ENCODE measurements at regions of chr2 and their contacts with region 1.

Region 1: DNA sequence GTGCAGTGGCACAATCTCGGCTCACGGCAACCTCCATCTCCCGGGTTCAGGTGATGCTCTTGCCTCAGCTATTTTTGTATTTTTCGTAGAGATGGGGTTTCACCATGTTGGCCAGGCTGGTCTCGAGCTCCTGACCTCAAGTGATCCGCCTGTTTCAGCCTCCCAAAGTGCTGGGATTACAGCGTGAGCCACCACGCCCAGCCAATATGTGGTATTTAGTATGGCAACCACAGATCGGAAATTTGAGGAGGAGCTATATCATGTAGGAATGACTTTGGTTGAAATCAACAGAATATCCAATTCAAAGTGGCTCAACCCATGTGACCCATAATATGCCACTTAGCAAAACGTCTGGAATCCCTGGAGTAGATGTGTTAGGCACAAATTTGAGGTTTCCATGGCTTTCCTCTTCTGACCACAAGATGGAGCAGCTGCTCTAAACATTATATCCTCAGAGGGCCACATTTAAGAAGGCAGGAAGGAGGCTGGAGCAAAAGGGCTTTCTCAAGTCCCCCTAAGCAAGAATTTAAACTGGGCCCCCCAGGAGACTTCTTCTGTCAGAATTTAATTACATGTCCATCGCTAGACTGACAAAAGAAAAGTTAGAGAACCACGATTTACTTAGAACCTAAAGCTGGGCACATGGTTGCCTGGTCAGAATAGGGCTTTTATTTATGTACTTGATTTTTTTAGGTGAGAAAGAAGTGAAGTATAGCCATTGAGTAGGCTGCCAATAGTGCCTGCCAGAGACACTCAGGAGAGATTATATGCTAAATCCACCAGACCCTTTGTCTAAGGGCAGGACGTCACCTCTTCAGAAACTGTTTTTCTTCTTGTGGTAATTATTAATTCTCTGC is 49.6 kb upstream of the ITSN2 start:
- DNase-seq: peak in 2 of 4 donors; percentile 65 to 83
- ATAC-seq: peak; percentile 97
- H3K4me3 ChIP-seq: no peak overlapping the region
- H3K27ac ChIP-seq: no peak overlapping the region
- H3K4me1 ChIP-seq: no peaks in the 10 kb centered on the region
- H3K27me3 ChIP-seq: peaks cover 0 to 9% of the 10 kb centered on the region in 2 donors
- CTCF ChIP-seq: peak; percentile 76 to 78

Region 2: GRCh38 chr2:24827321-24828237 is 417.7 kb after region 1 on chr2:
- intact Hi-C with region 1: loop called (anchors 5 to 10 kb)
- DNase-seq: peak in 3 of 4 donors; percentile 74 to 90 (median 77)
- ATAC-seq: peak; percentile 96
- H3K4me3 ChIP-seq: no peak overlapping the region
- H3K27ac ChIP-seq: no peak overlapping the region
- H3K4me1 ChIP-seq: peaks cover 0 to 6% of the 10 kb centered on the region in 2 donors
- H3K27me3 ChIP-seq: no peaks in the 10 kb centered on the region
- CTCF ChIP-seq: peak; percentile 71 to 90